ENCODE measurements at regions of chr7 and their contacts with region 1.

Region 1: DNA sequence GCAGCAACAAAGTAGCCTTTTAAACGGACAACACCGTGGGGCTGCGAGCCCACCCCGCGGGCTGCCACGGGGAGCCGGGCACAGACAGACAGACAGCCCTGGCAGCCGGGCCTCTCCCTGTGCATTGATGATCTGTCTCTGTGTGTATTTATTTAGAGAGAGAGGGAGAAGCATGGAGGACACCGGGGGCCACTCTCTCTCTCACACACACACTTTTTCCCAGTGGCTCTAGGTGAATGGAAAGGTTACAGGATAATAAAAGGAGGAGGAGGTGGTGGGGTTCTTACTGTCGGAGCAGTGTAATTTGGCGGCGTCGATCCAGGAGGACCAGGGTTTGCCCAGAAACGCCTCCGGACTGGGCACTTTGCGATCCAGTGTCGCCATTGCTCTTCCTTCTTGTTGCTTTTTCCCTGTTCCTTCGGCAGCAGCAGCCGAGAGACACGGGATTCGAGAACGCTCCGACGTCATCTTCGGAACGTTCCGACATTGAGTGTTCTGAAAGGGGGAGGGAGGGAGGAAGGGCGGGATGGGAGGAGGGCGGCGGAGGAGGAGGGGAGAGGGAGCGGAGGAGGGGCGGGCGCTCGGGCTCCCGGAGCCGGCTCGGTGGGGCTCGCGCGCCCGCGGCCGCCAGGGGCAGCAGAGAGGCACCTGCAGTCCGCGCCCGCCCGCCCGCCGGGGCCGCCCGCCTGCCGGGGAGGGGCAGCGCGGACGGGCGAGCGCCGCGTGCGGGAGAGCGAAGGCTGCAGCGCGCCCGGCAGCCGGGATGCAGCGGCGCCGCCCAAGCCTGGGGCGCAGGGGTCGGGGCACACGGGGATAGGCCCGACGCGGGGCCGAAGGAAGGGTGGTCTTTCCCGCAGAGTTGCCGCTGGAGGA is at the start of gene ATXN7L1:
- DNase-seq: peak; percentile 93 to 94
- ATAC-seq: peak; percentile 98
- H3K4me3 ChIP-seq: peak within 1 kb of the TSS; percentile 70 to 91 (median 81)
- H3K27ac ChIP-seq: peak within 1 kb of the TSS; percentile 80 to 89 (median 84)
- H3K4me1 ChIP-seq: peaks cover 18% of the 10 kb centered on the region in 2 donors
- H3K27me3 ChIP-seq: no peaks in the 10 kb centered on the region
- CTCF ChIP-seq: peak; percentile 51 to 91 (median 82)
- POLR2A ChIP-seq: peak; percentile 44 to 80
- total RNA-seq, gene ATXN7L1: 1.6 to 6.6 (median 4.8) TPM

Region 2: GRCh38 chr7:105480931-105481330 is 395.4 kb before region 1 on chr7:
- in situ Hi-C with region 1: no loop called
- intact Hi-C with region 1: no loop called
- DNase-seq: no peak
- ATAC-seq: no peak
- H3K4me3 ChIP-seq: no peak overlapping the region
- H3K27ac ChIP-seq: no peak overlapping the region
- H3K4me1 ChIP-seq: no peaks in the 10 kb centered on the region
- H3K27me3 ChIP-seq: no peaks in the 10 kb centered on the region
- CTCF ChIP-seq: no peak
- POLR2A ChIP-seq: no peak

Region 3: GRCh38 chr7:105673367-105674142 is 202.8 kb before region 1 on chr7:
- in situ Hi-C with region 1: no loop called
- intact Hi-C with region 1: loop called (anchors 5 kb)
- DNase-seq: peak; percentile 46 to 81
- ATAC-seq: peak; percentile 81 to 88
- H3K4me3 ChIP-seq: no peak overlapping the region
- H3K27ac ChIP-seq: peak overlapping the region; percentile 70 to 80 (median 77)
- H3K4me1 ChIP-seq: peaks cover 37 to 48% of the 10 kb centered on the region in 2 donors
- H3K27me3 ChIP-seq: no peaks in the 10 kb centered on the region
- CTCF ChIP-seq: no peak
- POLR2A ChIP-seq: no peak

Region 4: GRCh38 chr7:105776058-105776751 is 100.1 kb before region 1 on chr7:
- in situ Hi-C with region 1: no loop called
- intact Hi-C with region 1: loop called (anchors 5 kb)
- DNase-seq: peak; percentile 73 to 74
- ATAC-seq: peak; percentile 93 to 95
- H3K4me3 ChIP-seq: no peak overlapping the region
- H3K27ac ChIP-seq: peak overlapping the region; percentile 16 to 60 (median 36)
- H3K4me1 ChIP-seq: peaks cover 22 to 23% of the 10 kb centered on the region in 2 donors
- H3K27me3 ChIP-seq: no peaks in the 10 kb centered on the region
- CTCF ChIP-seq: no peak
- POLR2A ChIP-seq: no peak

Region 5: GRCh38 chr7:106009403-106010226 is 133.3 kb after region 1 on chr7:
- in situ Hi-C with region 1: loop called in 2 of 4 experiments (anchors 25 kb)
- intact Hi-C with region 1: loop called (anchors 1 kb)
- DNase-seq: peak; percentile 43 to 67
- ATAC-seq: peak; percentile 82 to 93
- H3K4me3 ChIP-seq: peak overlapping the region in 1 of 4 donors; percentile 8
- H3K27ac ChIP-seq: no peak overlapping the region
- H3K4me1 ChIP-seq: peaks cover 0 to 7% of the 10 kb centered on the region in 2 donors
- H3K27me3 ChIP-seq: no peaks in the 10 kb centered on the region
- CTCF ChIP-seq: peak; percentile 94 to 98 (median 96)
- POLR2A ChIP-seq: no peak

Region 6: GRCh38 chr7:106041140-106041717 is 164.9 kb after region 1 on chr7:
- in situ Hi-C with region 1: no loop called
- intact Hi-C with region 1: no loop called
- DNase-seq: no peak
- ATAC-seq: peak in 1 of 2 donors; percentile 43
- H3K4me3 ChIP-seq: no peak overlapping the region
- H3K27ac ChIP-seq: no peak overlapping the region
- H3K4me1 ChIP-seq: peaks cover 4 to 7% of the 10 kb centered on the region in 2 donors
- H3K27me3 ChIP-seq: no peaks in the 10 kb centered on the region
- CTCF ChIP-seq: peak; percentile 44 to 70 (median 53)
- POLR2A ChIP-seq: no peak

Region 7: DNA sequence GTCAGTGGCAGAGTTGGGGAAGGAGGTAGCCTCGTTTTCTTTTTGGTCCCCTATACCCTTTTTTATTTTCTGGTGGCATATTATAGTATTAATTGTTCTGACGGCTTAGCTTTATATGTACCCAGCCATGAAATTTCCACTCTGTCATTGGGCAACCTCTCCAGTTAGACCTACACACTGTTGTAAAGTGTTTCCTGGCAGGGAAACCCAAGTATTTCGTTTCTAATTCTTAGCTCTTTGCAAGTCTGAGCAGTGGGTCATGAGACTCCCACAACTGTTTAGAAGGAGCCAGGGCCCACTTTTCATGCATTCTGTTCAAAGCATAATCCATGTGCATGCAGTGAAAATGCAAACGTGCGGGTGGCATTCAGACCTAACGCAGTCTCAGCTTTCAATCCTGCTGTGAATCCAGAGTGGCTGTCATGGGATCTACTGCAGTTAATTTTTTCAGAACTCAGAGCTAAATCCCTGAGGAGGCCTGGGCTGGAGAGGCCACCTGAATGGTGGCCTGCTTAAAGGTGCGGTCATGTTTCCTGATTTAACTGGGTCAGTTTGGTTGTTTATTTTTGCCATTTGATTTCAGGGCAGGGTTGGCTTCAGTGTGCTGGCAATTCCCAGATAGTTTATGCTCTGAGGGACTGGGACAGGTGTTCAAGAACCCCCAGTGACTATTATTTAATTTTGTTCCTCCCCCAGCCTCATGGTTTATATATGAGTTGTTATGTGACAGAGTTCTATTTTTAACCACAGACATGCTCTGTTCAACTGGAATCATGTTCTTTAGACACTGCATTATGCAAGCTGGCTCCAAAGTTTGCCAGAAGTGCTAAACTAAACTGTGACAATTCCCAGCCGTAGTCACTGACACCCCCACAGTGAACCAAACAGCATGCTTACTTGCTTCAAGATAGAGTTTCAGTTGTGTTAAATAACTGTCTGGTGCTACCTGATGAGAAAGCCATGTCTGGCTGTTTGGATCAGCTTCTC is 263.2 kb after region 1 on chr7:
- in situ Hi-C with region 1: no loop called
- intact Hi-C with region 1: loop called (anchors 10 kb)
- DNase-seq: peak; percentile 84 to 88
- ATAC-seq: peak; percentile 91 to 93
- H3K4me3 ChIP-seq: peak overlapping the region; percentile 7 to 26 (median 10)
- H3K27ac ChIP-seq: peak overlapping the region; percentile 91 to 98 (median 93)
- H3K4me1 ChIP-seq: peaks cover 32 to 38% of the 10 kb centered on the region in 2 donors
- H3K27me3 ChIP-seq: no peaks in the 10 kb centered on the region
- CTCF ChIP-seq: peak in 1 of 5 experiments; percentile 9
- POLR2A ChIP-seq: peak in 1 of 2 donors; percentile 64

Region 8: GRCh38 chr7:106153891-106154449 is 277.6 kb after region 1 on chr7:
- in situ Hi-C with region 1: loop called in 1 of 4 experiments (anchors 25 kb)
- intact Hi-C with region 1: loop called (anchors 10 kb)
- DNase-seq: peak; percentile 66 to 79
- ATAC-seq: peak; percentile 89 to 98
- H3K4me3 ChIP-seq: peak overlapping the region in 2 of 4 donors; percentile 24 to 26
- H3K27ac ChIP-seq: no peak overlapping the region
- H3K4me1 ChIP-seq: peaks cover 13 to 19% of the 10 kb centered on the region in 2 donors
- H3K27me3 ChIP-seq: no peaks in the 10 kb centered on the region
- CTCF ChIP-seq: peak; percentile 95 to 98 (median 97)
- POLR2A ChIP-seq: no peak

Region 9: DNA sequence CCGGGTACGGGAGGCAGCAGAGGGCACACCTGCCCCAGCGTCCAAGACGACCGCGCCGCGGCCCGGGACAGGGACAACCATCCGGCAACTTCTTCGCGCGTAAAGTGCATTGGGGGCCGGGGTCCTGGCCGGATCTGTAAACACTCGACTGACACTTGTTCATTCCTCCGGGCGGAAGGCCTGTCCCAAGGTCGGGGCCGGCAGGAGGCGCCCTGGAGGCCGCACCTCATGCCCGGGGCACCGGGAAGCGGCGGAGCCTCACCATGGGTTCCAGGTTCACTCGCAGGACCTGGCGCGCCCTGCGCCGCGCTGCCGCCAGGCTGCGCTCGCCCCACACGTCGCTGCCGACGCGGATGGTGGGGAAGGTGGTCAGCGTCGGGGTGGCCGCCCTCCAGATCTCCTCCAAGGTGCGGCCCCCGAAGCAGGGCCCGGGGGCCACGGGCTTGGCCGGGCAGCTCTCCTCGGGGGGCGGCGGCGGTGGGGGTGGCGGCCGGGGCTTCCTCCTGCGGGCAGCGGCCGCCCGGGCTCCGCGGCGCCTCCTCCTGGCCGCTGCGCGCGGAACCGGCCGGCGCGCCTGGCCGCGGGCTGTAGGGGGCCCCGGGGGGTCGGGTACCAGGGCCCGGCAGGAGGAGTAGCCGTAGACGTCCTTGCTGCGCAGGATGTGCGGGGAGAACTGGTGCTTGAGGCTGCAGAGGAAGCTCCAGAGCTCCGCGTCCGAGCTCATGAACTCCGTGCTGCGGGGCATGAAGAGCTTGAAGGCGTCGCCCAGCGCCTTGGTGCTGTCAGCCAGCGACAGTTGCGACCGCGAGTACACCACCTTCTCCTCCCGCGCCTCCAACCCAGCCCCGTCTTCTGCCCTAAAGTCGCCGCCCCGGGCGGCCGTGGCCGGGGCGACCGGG is 783.9 kb after region 1 on chr7:
- in situ Hi-C with region 1: no loop called
- intact Hi-C with region 1: loop called (anchors 5 kb)
- DNase-seq: peak; percentile 23 to 59
- ATAC-seq: peak; percentile 57 to 66
- H3K4me3 ChIP-seq: peak overlapping the region; percentile 60 to 89 (median 78)
- H3K27ac ChIP-seq: peak overlapping the region; percentile 82 to 91 (median 88)
- H3K4me1 ChIP-seq: peaks cover 8 to 12% of the 10 kb centered on the region in 2 donors
- H3K27me3 ChIP-seq: no peaks in the 10 kb centered on the region
- CTCF ChIP-seq: peak; percentile 49 to 76 (median 67)
- POLR2A ChIP-seq: peak in 1 of 2 donors; percentile 9